SK-N-SH (cell line): ENCODE measurements at regions of chr1 and their contacts with region 1.

Region 1: GRCh38 chr1:229661022-229661877 is 35.2 kb downstream of the URB2 start:
- DNase-seq: peak; percentile 83
- H3K4me3 ChIP-seq: no peak overlapping the region; a peak in 1 of 4 replicates
- H3K27ac ChIP-seq: 0 out of 4 replicates have a peak overlapping the region, but pooled peaks of 1 of the 2 experiments have one; percentile 4
- H3K4me1 ChIP-seq: peaks cover 0 to 28% of the 10 kb centered on the region in 2 experiments; a peak in 2 of 4 replicates
- H3K27me3 ChIP-seq: no peaks in the 10 kb centered on the region
- CTCF ChIP-seq: peak; percentile 80
- EP300 ChIP-seq: no peak
- RAD21 ChIP-seq: peak; percentile 94

Region 2: GRCh38 chr1:229563701-229564100 is 97.5 kb before region 1 on chr1:
- CTCF ChIA-PET with region 1: no interaction called
- POLR2A ChIA-PET with region 1: no interaction called
- DNase-seq: no peak
- H3K4me3 ChIP-seq: no peak overlapping the region
- H3K27ac ChIP-seq: no peak overlapping the region
- H3K4me1 ChIP-seq: no peaks in the 10 kb centered on the region; a peak in 1 of 4 replicates
- H3K27me3 ChIP-seq: no peaks in the 10 kb centered on the region
- CTCF ChIP-seq: no peak
- EP300 ChIP-seq: no peak
- RAD21 ChIP-seq: no peak

Region 3: GRCh38 chr1:229650045-229650444 is 11.2 kb before region 1 on chr1:
- CTCF ChIA-PET with region 1: interaction called, 21 read pairs
- POLR2A ChIA-PET with region 1: interaction called, 3 read pairs
- DNase-seq: no peak
- H3K4me3 ChIP-seq: no peak overlapping the region
- H3K27ac ChIP-seq: no peak overlapping the region
- H3K4me1 ChIP-seq: no peaks in the 10 kb centered on the region; a peak in 1 of 4 replicates
- H3K27me3 ChIP-seq: no peaks in the 10 kb centered on the region
- CTCF ChIP-seq: no peak
- EP300 ChIP-seq: no peak
- RAD21 ChIP-seq: no peak

Region 4: DNA sequence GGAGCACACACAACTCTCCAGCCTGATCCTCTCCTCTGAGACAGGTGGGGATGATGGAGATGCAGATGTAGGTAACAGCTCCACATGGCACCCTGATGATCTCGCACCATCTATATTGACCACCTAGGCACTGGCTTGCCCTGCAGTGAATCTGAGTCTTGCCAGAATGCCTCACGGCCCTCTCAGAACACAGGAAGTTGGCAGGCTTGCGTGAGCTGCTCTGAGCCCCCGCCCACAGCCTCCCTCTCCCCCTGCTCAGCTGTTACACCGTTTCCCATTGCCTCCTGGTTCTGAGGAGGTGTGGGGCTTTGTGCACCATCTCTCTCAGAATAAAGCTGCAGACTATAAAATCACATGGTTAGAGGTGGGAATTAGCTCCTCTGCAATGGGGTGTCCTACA is 12.8 kb after region 1 on chr1:
- CTCF ChIA-PET with region 1: interaction called, 13 read pairs
- POLR2A ChIA-PET with region 1: no interaction called
- DNase-seq: no peak
- H3K4me3 ChIP-seq: no peak overlapping the region
- H3K27ac ChIP-seq: no peak overlapping the region
- H3K4me1 ChIP-seq: peaks cover 0 to 2% of the 10 kb centered on the region in 2 experiments; a peak in 1 of 4 replicates
- H3K27me3 ChIP-seq: no peaks in the 10 kb centered on the region
- CTCF ChIP-seq: no peak
- EP300 ChIP-seq: no peak
- RAD21 ChIP-seq: no peak

Region 5: DNA sequence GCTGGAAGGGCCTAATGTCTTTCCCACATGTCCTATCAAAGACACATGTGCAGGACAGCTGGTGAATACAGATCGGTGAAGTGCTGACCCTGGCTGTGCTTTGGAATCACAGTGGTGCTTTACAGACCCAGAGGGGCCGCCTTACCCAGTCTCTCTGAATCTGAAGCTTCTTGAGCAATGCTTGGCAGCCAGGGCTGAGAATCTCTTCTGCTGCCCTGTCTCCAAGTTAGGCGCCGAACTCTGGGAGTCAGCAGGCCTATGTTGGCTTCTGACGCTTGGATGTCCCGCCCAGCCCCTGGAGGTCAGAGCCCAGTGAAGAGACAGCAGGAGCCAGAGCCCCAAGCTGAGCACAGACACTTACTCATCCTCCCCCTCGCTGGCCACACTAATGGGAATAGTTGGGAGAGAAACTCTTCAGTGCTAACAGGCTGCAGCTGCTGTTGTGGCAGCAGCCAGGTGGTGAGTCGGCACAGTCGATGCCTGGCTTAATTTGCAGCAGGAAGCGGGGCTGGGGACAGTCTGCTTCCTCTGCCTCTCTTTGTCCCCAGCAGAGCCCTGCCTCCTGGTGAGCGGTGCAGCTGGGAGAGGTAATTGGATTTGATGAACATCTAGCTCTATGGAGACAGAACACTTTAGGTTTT is 32.9 kb after region 1 on chr1:
- CTCF ChIA-PET with region 1: interaction called, 13 read pairs
- POLR2A ChIA-PET with region 1: no interaction called
- DNase-seq: peak; percentile 80
- H3K4me3 ChIP-seq: no peak overlapping the region
- H3K27ac ChIP-seq: peak overlapping the region; percentile 12 to 99; a peak in 3 of 4 replicates
- H3K4me1 ChIP-seq: peaks cover 20 to 38% of the 10 kb centered on the region in 2 experiments; a peak in 3 of 4 replicates
- H3K27me3 ChIP-seq: no peaks in the 10 kb centered on the region
- CTCF ChIP-seq: no peak
- EP300 ChIP-seq: peak in 1 of 2 experiments; percentile 51; a peak in 1 of 4 replicates
- RAD21 ChIP-seq: no peak

Region 6: GRCh38 chr1:230067871-230068620 is 406.8 kb after region 1 on chr1:
- CTCF ChIA-PET with region 1: interaction called, 10 read pairs
- POLR2A ChIA-PET with region 1: no interaction called
- DNase-seq: peak; percentile 79
- H3K4me3 ChIP-seq: peak overlapping the region; percentile 97 to 98
- H3K27ac ChIP-seq: peak overlapping the region; percentile 68 to 91
- H3K4me1 ChIP-seq: peaks cover 22 to 27% of the 10 kb centered on the region in 2 experiments
- H3K27me3 ChIP-seq: no peaks in the 10 kb centered on the region
- CTCF ChIP-seq: 0 out of 2 replicates have a peak, but pooled peaks have one; percentile 15
- EP300 ChIP-seq: no peak
- RAD21 ChIP-seq: peak; percentile 13; the same call in 1 of the 2 replicates

Region 7: GRCh38 chr1:230303822-230304221 is 642.6 kb after region 1 on chr1:
- CTCF ChIA-PET with region 1: interaction called, 17 read pairs
- POLR2A ChIA-PET with region 1: no interaction called
- DNase-seq: no peak
- H3K4me3 ChIP-seq: no peak overlapping the region
- H3K27ac ChIP-seq: no peak overlapping the region
- H3K4me1 ChIP-seq: peaks cover 0 to 15% of the 10 kb centered on the region in 2 experiments; a peak in 2 of 4 replicates
- H3K27me3 ChIP-seq: no peaks in the 10 kb centered on the region
- CTCF ChIP-seq: no peak
- EP300 ChIP-seq: no peak
- RAD21 ChIP-seq: no peak

Region 8: DNA sequence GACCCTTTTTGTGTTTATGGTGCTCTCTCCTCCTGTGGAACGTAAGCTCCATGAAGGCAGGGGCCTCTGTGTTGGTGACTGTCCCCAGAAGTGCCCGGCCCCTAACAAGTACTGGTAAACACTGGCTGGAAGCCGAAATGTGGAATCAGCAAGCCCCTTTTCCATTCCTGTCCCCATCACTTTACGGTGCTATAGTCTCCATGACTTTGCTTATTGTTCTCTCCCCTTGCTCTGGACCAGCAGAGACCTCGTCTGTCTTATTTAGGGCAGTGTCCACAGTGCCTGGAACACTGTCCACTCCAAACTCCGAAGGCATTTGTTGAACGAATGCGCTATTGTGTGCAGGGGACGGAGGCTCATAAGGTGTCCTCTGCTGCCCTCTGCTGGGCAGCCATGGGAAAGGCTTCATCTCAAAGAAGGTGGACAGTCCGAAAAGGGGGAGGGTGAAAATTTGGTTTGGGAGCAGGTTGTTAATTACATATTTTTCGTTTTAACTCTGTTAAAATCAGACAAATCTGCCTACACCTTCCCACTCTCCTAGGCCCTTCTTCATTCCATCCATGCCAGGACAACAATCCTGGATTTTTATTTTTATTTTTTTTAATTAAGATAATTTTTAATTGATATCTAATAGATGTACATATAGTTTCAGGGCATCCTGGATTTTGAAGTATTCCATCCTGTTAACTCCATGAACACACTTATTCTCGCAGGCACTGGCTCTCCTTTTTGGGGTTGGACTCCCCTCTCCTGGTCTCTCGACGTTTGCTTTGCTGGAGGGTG is 649.3 kb after region 1 on chr1:
- CTCF ChIA-PET with region 1: interaction called, 17 read pairs
- POLR2A ChIA-PET with region 1: no interaction called
- DNase-seq: peak; percentile 88
- H3K4me3 ChIP-seq: no peak overlapping the region; a peak in 1 of 4 replicates
- H3K27ac ChIP-seq: no peak overlapping the region
- H3K4me1 ChIP-seq: peaks cover 0 to 9% of the 10 kb centered on the region in 2 experiments; a peak in 2 of 4 replicates
- H3K27me3 ChIP-seq: no peaks in the 10 kb centered on the region
- CTCF ChIP-seq: peak; percentile 92
- EP300 ChIP-seq: no peak
- RAD21 ChIP-seq: peak; percentile 98